IMR-90 (cell line): ENCODE measurements at regions of chr5 and their contacts with region 1.

Region 1: GRCh38 chr5:141691867-141692532 is 10.0 kb upstream of the ARAP3 start:
- DNase-seq: peak; percentile 60
- ATAC-seq: peak; percentile 99
- H3K4me3 ChIP-seq: peak overlapping the region; percentile 43
- H3K27ac ChIP-seq: no peak overlapping the region
- H3K4me1 ChIP-seq: no peaks in the 10 kb centered on the region; the same call in 1 of the 2 replicates
- H3K27me3 ChIP-seq: peaks cover 49% of the 10 kb centered on the region
- CTCF ChIP-seq: peak; percentile 99
- POLR2A ChIP-seq: peak; percentile 53; the same call in 1 of the 2 replicates
- RAD21 ChIP-seq: peak; percentile 99

Region 2: DNA sequence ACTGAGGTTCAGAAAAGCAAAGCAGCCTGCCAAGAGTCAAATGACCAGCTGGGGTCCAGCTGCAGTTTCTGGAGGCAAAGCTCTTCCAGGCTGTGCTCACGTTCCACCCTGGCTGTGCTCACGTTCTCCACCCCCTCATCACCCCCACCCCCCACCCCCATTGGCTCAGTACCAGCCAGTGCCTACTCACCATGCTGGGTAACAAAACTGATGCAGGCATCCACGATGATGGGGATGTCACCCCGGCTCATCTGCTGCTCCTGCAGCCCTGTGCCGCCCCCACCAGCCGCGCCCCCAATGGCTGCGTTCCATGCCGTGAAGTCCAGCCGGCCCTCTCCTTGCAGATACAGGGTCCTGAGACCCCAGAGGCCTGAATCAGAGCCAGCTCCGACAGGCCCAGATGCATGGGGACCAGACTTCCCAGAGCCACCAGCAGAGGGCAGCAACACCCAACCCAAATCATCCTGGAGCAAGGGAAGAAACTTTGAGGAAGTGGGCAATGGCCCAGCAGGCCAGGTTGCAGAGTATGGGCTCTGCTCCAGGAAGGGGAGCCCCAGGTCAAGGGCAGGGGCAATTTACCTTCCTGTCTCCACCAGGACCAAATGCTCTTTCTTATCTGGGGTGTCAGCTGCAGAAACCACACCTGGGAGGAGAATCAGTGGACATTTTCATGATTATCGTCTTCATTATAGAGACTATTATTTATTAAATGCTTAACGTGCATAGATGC is 27.1 kb before region 1 on chr5:
- CTCF ChIA-PET with region 1: no interaction called
- POLR2A ChIA-PET with region 1: no interaction called
- dilution Hi-C with region 1: no loop called
- in situ Hi-C with region 1: no loop called
- intact Hi-C with region 1: loop called (anchors 1 kb)
- DNase-seq: peak; percentile 58
- ATAC-seq: peak; percentile 93
- H3K4me3 ChIP-seq: no peak overlapping the region
- H3K27ac ChIP-seq: no peak overlapping the region
- H3K4me1 ChIP-seq: no peaks in the 10 kb centered on the region
- H3K27me3 ChIP-seq: no peaks in the 10 kb centered on the region
- CTCF ChIP-seq: peak; percentile 88
- POLR2A ChIP-seq: no peak
- RAD21 ChIP-seq: peak; percentile 83

Region 3: GRCh38 chr5:141960449-141961202 is 268.6 kb after region 1 on chr5:
- CTCF ChIA-PET with region 1: interaction called, 32 read pairs
- POLR2A ChIA-PET with region 1: interaction called, 3 read pairs
- dilution Hi-C with region 1: no loop called
- in situ Hi-C with region 1: loop called (anchors 5 kb)
- intact Hi-C with region 1: loop called (anchors 1 kb)
- DNase-seq: peak; percentile 75
- ATAC-seq: peak; percentile 98
- H3K4me3 ChIP-seq: no peak overlapping the region
- H3K27ac ChIP-seq: no peak overlapping the region
- H3K4me1 ChIP-seq: no peaks in the 10 kb centered on the region
- H3K27me3 ChIP-seq: peaks cover 2% of the 10 kb centered on the region; the same call in 1 of the 2 replicates
- CTCF ChIP-seq: peak; percentile 90
- POLR2A ChIP-seq: no peak
- RAD21 ChIP-seq: peak; percentile 80

Region 4: GRCh38 chr5:142108432-142109330 is 416.7 kb after region 1 on chr5 and contains the start of gene NDFIP1:
- CTCF ChIA-PET with region 1: no interaction called
- POLR2A ChIA-PET with region 1: no interaction called
- dilution Hi-C with region 1: no loop called
- in situ Hi-C with region 1: loop called (anchors 25 kb)
- intact Hi-C with region 1: no loop called
- DNase-seq: peak; percentile 60
- ATAC-seq: peak; percentile 99
- H3K4me3 ChIP-seq: peak within 1 kb of the TSS; percentile 82
- H3K27ac ChIP-seq: peak within 1 kb of the TSS; percentile 87
- H3K4me1 ChIP-seq: peaks cover 4% of the 10 kb centered on the region
- H3K27me3 ChIP-seq: no peaks in the 10 kb centered on the region
- CTCF ChIP-seq: no peak
- POLR2A ChIP-seq: peak; percentile 74
- RAD21 ChIP-seq: no peak
- total RNA-seq, gene NDFIP1: 7.7 and 21.9 TPM in 2 replicates

Region 5: DNA sequence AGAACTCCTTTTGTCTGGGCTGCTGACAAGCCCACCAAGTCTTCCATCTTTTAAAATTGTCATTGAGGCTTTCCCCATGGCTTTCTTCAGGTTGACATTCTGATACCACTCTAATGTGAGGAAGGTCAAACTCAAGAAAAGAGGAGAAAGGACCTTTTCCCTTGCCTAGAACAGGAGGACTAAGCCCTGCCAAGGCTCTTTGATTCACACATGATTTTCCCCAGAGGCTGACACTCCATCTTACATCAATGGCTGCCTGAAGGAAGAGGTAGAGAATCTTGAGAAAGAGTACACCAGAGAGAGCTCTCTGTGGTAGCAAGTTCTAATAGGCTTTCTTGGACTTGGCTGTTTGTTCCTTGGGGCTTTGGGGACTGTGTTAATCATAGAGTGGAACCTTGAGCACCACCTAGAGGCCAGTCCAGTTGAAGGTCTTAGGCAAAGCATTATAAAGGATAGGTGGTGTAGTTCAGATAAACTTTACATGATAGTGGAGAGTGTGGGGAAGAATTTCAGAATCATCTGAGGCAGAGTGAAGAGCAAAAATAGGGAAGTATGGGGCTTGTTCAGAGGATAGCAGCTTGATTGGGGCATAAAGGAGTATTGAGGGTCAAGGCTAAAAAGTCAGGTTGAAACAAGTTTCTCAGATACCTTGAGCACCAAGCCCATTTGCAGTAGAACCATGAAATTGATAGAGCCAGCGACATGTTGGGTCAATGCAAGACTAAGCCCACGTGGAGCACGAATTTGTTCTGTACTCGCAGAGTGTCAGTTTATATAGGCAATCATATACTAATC is 453.3 kb after region 1 on chr5:
- CTCF ChIA-PET with region 1: no interaction called
- POLR2A ChIA-PET with region 1: no interaction called
- dilution Hi-C with region 1: no loop called
- in situ Hi-C with region 1: no loop called
- intact Hi-C with region 1: loop called (anchors 5 kb)
- DNase-seq: peak; percentile 68
- ATAC-seq: peak; percentile 97
- H3K4me3 ChIP-seq: no peak overlapping the region
- H3K27ac ChIP-seq: no peak overlapping the region
- H3K4me1 ChIP-seq: no peaks in the 10 kb centered on the region
- H3K27me3 ChIP-seq: no peaks in the 10 kb centered on the region
- CTCF ChIP-seq: peak; percentile 68
- POLR2A ChIP-seq: no peak
- RAD21 ChIP-seq: peak; percentile 52